ENCODE measurements at regions of chr2 and their contacts with region 1.

Region 1: GRCh38 chr2:45180779-45181178 is 171.5 kb upstream of the SIX2 start:
- DNase-seq: no peak
- ATAC-seq: no peak
- H3K4me3 Mint-ChIP-seq: no peak overlapping the region
- H3K27ac Mint-ChIP-seq: no peak overlapping the region
- H3K4me1 Mint-ChIP-seq: peaks cover 7% of the 10 kb centered on the region
- H3K27me3 Mint-ChIP-seq: no peaks in the 10 kb centered on the region
- CTCF ChIP-seq: no peak

Region 2: GRCh38 chr2:45283764-45284620 is 103.2 kb after region 1 on chr2:
- CTCF ChIA-PET with region 1: no interaction called
- POLR2A ChIA-PET with region 1: no interaction called
- DNase-seq: no peak
- ATAC-seq: no peak
- H3K4me3 Mint-ChIP-seq: no peak overlapping the region
- H3K27ac Mint-ChIP-seq: no peak overlapping the region
- H3K4me1 Mint-ChIP-seq: no peaks in the 10 kb centered on the region; the same call in 1 of the 2 replicates
- H3K27me3 Mint-ChIP-seq: peaks cover 4% of the 10 kb centered on the region; the same call in 1 of the 2 replicates
- CTCF ChIP-seq: no peak

Region 3: DNA sequence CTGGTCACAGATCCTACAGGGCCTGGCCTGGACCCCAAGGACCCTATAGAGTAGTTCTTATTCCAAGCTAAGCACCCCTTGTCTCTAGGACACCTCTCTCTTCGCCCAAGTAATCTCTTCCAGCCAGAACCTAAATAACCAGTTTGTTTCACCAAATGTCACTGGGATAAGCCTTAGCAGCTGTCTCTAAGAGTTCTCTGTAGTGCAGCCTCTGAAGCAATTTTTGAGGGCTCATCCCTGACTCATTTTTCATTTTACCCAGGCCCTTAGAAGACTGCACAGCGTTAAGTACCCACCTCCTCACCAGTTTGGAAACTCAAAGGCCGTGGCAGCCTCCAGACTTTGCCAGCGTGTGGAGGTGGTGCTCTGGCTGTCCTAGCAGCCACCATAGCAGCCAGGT is 118.6 kb after region 1 on chr2:
- CTCF ChIA-PET with region 1: no interaction called
- POLR2A ChIA-PET with region 1: interaction called, 12 read pairs
- DNase-seq: no peak
- ATAC-seq: no peak
- H3K4me3 Mint-ChIP-seq: no peak overlapping the region
- H3K27ac Mint-ChIP-seq: no peak overlapping the region
- H3K4me1 Mint-ChIP-seq: peaks cover 1% of the 10 kb centered on the region
- H3K27me3 Mint-ChIP-seq: no peaks in the 10 kb centered on the region
- CTCF ChIP-seq: no peak

Measured in WTC11 (cell line).